Activated CD4-positive, alpha-beta memory T cell treated with anti-CD3 and anti-CD28 coated beads, Interleukin-2, amount 10 ng/mL, durations not matched to agents 7 days and 5 days (primary cell): ENCODE measurements at regions of chr12 and their contacts with region 1.

Region 1: DNA sequence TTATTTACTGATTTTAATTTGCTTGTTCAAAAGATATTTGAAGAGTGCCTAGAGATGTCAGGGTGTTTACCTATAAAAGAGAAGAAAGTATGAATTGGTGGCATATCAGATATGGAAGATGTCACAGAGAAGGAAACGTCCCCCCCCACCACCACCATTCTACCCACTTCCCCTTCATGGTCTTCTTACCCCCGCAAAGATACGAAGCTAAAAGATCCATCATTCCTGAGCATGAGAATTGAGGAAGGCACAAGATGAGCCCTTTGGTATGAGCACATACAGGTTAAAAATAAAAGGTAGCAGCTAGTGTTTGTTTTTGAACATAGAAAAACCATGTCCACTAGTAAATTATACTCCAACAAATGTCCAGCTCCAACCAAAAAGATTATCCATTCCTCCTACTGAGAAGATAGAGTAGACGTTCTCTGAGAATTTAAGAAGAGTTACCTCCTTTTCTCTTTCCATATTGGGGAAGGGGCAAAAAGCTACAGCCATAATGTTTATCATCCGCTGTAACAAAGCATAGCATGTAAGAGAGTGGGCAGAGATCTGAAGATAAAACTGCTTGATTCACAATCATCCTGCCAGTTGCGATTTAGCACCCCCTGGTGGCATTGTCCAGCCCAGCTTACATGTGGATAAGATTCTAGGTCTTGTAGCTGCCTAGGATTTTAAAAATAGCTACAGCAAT is 29.1 kb downstream of the NFYB start:
- DNase-seq: peak; percentile 88
- H3K4me3 Mint-ChIP-seq: no peak overlapping the region
- H3K27ac Mint-ChIP-seq: no peak overlapping the region
- H3K4me1 Mint-ChIP-seq: peaks cover 5% of the 10 kb centered on the region
- H3K27me3 Mint-ChIP-seq: no peaks in the 10 kb centered on the region

Region 2: GRCh38 chr12:103884316-103884715 is 224.6 kb before region 1 on chr12:
- CTCF ChIA-PET with region 1: interaction called, 20 read pairs
- POLR2A ChIA-PET with region 1: interaction called, 3 read pairs
- DNase-seq: peak; percentile 37
- H3K4me3 Mint-ChIP-seq: no peak overlapping the region
- H3K27ac Mint-ChIP-seq: no peak overlapping the region
- H3K4me1 Mint-ChIP-seq: peaks cover 17% of the 10 kb centered on the region
- H3K27me3 Mint-ChIP-seq: no peaks in the 10 kb centered on the region

Region 3: DNA sequence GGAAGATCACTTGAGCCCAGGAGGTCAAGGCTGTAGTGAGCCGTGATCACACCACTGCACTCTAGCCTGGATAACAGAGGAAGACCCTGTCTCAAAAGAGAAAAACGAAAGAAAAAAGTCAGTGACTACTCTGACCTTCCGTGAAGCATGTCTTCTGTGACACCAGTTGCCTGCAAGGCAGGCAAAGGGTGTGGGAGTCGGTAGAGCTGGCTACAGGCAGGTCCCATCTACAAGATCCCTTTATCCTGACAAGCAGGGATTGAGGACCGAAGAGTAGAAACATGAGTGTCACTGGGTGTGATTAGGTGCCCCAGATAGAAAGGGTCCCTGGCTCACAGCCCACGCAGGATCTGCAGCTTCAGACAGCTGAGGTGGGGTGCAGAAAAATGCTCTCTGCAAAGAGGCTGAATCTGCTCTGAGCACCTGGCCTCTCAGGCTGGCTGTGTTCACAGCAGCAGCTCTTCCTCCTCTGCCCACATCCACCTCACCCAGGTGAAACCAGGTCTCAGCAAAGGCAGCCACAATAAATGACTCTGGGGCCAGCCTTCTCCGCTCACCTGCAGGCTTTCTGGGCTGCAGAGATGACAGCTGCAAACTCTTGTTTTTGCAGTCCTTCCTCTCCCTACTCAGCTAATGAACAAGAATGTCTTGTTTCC is 207.3 kb before region 1 on chr12:
- CTCF ChIA-PET with region 1: no interaction called
- POLR2A ChIA-PET with region 1: no interaction called
- DNase-seq: peak; percentile 26
- H3K4me3 Mint-ChIP-seq: no peak overlapping the region
- H3K27ac Mint-ChIP-seq: no peak overlapping the region
- H3K4me1 Mint-ChIP-seq: peaks cover 20% of the 10 kb centered on the region
- H3K27me3 Mint-ChIP-seq: no peaks in the 10 kb centered on the region

Region 4: GRCh38 chr12:104002686-104003085 is 106.2 kb before region 1 on chr12:
- CTCF ChIA-PET with region 1: no interaction called
- POLR2A ChIA-PET with region 1: no interaction called
- DNase-seq: no peak
- H3K4me3 Mint-ChIP-seq: no peak overlapping the region
- H3K27ac Mint-ChIP-seq: no peak overlapping the region
- H3K4me1 Mint-ChIP-seq: no peaks in the 10 kb centered on the region
- H3K27me3 Mint-ChIP-seq: peaks cover 51% of the 10 kb centered on the region

Region 5: DNA sequence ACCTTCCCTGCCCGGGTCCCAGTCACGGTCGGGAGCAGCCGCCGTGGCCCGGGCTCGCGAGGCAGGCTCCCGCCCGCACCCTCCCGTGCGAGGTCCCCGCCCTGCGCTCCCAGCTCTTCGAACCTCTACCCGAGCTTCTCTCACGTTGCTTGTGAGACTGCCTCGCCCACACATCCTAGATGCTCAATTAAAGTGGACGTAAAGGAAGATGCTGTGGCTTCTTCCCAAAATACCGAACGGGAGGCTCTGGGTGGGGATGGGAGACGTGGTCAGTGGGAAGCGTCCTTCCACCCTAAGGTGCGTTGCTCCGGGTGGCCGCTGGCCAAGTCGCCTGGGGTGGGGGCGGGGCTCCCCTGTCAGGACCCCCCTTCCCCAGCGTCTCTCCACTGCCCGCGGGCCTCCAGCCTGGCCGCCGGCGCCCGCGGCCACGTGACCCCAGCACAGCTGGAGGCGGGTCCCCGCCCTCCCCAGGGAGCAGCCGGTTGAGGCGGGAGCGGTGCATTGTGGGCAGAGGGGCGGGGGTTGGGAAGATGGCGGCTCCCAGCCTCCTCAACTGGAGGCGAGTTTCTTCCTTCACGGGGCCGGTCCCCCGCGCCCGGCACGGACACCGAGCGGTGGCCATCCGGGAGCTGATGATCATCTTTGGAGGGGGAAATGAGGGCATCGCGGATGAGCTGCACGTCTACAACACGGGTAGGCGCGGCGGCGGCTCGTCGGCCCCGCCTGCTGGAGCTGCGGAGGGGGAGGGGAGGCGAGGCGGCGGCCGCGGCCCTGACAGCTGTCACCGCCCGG is 44.7 kb before region 1 on chr12 and contains the start of gene HCFC2:
- CTCF ChIA-PET with region 1: interaction called, 98 read pairs
- POLR2A ChIA-PET with region 1: interaction called, 7 read pairs
- DNase-seq: peak; percentile 92
- H3K4me3 Mint-ChIP-seq: peak within 1 kb of the TSS; percentile 95
- H3K27ac Mint-ChIP-seq: peak within 1 kb of the TSS; percentile 76
- H3K4me1 Mint-ChIP-seq: peaks cover 25% of the 10 kb centered on the region
- H3K27me3 Mint-ChIP-seq: peaks cover 14% of the 10 kb centered on the region
- total RNA-seq, gene HCFC2: 15.8 to 17.7 TPM

Region 6: DNA sequence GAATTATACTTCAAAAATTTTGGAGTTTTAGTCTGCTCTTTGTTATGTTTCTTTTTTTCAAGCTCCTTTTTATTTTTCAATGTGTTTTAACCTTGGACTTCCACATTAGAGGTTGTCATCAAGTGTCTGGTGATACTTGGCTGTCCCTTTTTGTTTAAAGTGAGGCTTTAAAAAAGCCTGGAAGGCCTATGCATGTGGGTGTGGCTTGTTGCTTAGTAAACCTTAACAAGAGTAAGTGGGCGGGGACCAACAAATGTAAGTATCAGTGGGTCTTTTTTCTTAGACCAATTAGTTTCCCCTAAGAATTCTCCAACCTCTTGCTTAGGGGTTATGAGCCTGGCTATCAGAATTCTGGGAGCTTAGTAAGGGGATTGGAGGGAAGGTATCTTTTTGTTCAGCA is 18.2 kb before region 1 on chr12:
- CTCF ChIA-PET with region 1: interaction called, 13 read pairs
- POLR2A ChIA-PET with region 1: interaction called, 5 read pairs
- DNase-seq: no peak
- H3K4me3 Mint-ChIP-seq: no peak overlapping the region
- H3K27ac Mint-ChIP-seq: no peak overlapping the region
- H3K4me1 Mint-ChIP-seq: peaks cover 9% of the 10 kb centered on the region
- H3K27me3 Mint-ChIP-seq: no peaks in the 10 kb centered on the region

Region 7: GRCh38 chr12:104126548-104126947 is 17.6 kb after region 1 on chr12:
- CTCF ChIA-PET with region 1: interaction called, 15 read pairs
- POLR2A ChIA-PET with region 1: no interaction called
- DNase-seq: no peak
- H3K4me3 Mint-ChIP-seq: no peak overlapping the region
- H3K27ac Mint-ChIP-seq: no peak overlapping the region
- H3K4me1 Mint-ChIP-seq: peaks cover 2% of the 10 kb centered on the region
- H3K27me3 Mint-ChIP-seq: no peaks in the 10 kb centered on the region

Region 8: GRCh38 chr12:104190641-104191176 is 81.8 kb after region 1 on chr12:
- CTCF ChIA-PET with region 1: no interaction called
- POLR2A ChIA-PET with region 1: no interaction called
- DNase-seq: no peak
- H3K4me3 Mint-ChIP-seq: no peak overlapping the region
- H3K27ac Mint-ChIP-seq: no peak overlapping the region
- H3K4me1 Mint-ChIP-seq: no peaks in the 10 kb centered on the region
- H3K27me3 Mint-ChIP-seq: peaks cover 9% of the 10 kb centered on the region